ENCODE measurements at regions of chr15 and their contacts with region 1.

Region 1: DNA sequence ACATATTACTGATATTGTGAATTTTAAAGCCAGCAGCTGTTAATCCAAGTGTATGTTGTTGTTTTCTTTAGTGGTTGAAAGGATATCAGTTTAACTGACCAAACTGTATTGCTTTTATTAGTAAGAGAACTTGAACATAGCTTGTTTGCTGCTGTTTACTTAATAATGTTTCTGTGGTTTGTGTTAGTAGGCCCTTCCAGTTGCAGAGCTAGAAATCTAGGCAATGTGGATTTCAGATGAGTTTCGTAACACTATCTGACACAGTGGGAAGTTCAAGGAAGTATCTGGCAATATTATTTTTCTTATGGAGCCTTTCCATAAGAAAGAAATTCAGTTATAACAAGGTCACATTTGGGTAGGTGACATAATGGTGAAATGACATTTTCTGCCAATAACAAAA is 18.5 kb downstream of the ZNF609 start:
- DNase-seq: no peak
- ATAC-seq: no peak
- H3K4me3 ChIP-seq: no peak overlapping the region
- H3K27ac ChIP-seq: no peak overlapping the region
- H3K4me1 ChIP-seq: no peaks in the 10 kb centered on the region
- H3K27me3 ChIP-seq: no peaks in the 10 kb centered on the region
- CTCF ChIP-seq: no peak

Region 2: DNA sequence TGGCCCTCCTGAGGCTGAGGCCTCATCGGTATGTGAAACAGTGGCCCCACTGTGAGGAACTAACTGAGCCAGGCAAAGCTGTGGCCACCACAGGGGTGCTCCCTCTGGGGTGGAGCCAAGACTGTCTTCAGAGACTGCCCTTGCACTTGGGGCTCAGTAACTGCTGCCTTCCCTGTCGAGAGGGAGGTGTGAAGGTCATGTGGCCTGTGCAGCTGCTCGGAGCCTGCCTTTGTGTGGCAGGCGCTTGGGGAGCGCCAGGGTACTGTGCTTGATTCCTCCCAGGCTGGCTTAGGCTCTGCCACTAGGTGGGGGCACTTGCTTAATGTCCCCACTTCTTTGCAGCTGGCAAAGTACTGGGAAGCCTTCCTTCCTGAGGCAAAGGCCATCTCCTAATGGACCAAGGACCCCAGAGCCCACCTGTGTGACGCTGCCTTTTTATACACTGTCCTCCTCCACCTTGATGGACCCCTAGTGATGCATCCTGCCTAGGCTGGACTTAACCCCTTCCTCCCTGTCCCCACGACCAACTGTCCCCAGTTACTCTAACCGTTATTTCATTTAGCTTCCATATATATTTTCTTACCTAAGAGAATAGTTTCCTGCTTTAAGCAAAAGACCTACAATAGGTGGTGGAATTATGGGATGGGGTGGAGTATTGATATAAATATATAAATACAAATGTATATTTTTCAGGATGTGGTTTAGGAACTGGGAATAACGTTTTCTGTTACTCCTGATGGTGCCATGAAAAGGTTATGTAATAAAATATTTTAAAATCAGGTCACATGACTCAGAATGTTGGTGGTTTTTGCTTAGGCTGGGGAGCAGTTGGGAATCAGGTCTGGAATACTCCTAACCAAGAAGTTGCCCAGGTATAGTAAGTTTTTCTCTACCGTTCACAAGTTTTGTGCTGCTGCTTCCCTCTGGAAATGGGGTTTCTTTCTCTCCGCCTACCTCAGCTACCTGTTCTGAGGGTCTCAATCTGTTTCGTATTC is 341.3 kb before region 1 on chr15:
- CTCF ChIA-PET with region 1: no interaction called
- POLR2A ChIA-PET with region 1: no interaction called
- in situ Hi-C with region 1: no loop called
- intact Hi-C with region 1: no loop called
- DNase-seq: no peak
- ATAC-seq: peak; percentile 64; the same call in 1 of the 2 replicates
- H3K4me3 ChIP-seq: no peak overlapping the region
- H3K27ac ChIP-seq: no peak overlapping the region
- H3K4me1 ChIP-seq: no peaks in the 10 kb centered on the region
- H3K27me3 ChIP-seq: no peaks in the 10 kb centered on the region
- CTCF ChIP-seq: no peak; the same call in 1 of the 2 replicates

Region 3: DNA sequence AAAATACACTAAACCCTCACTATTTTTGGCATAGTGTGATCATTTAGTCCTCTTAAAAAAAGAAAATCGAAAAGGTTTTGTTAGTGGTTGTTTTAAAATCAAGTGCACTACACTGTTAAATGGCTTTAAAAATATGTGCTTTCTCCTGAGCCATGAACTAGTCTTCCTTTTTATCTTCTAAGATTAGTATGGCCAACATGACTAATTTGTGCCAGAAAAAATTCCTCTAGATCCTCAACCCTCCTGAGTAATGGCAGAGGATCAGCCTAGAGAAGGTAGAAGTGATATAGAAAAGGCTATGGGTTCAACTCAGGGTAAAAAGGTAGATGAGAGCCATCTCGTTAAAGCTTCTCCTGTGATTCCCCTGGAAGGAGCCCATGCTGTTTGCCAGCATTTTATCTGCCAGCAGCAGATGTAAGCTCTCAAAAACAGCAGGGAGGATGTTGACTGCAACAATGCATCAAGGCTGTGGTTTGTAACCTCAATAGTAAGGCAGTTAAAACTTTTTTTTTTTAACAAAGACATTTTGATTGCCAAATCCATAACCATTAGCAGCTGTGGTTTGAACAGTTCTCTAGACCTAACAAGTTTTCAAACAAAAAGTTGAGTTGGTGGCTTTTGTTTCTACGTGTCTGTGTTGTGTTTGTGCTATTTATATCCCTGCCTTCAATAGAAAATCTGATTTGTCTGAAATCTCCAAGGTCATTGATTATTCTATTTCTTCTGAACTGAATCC is 48.7 kb before region 1 on chr15:
- CTCF ChIA-PET with region 1: no interaction called
- POLR2A ChIA-PET with region 1: interaction called, 10 read pairs
- in situ Hi-C with region 1: no loop called
- intact Hi-C with region 1: no loop called
- DNase-seq: no peak
- ATAC-seq: no peak
- H3K4me3 ChIP-seq: no peak overlapping the region
- H3K27ac ChIP-seq: no peak overlapping the region
- H3K4me1 ChIP-seq: no peaks in the 10 kb centered on the region
- H3K27me3 ChIP-seq: no peaks in the 10 kb centered on the region
- CTCF ChIP-seq: no peak

Region 4: GRCh38 chr15:64536244-64536836 is 57.5 kb after region 1 on chr15:
- CTCF ChIA-PET with region 1: no interaction called
- POLR2A ChIA-PET with region 1: no interaction called
- in situ Hi-C with region 1: no loop called
- intact Hi-C with region 1: loop called (anchors 10 kb)
- DNase-seq: peak; percentile 64
- ATAC-seq: peak; percentile 90
- H3K4me3 ChIP-seq: no peak overlapping the region
- H3K27ac ChIP-seq: 0 out of 2 replicates have a peak overlapping the region, but pooled peaks have one; percentile 6
- H3K4me1 ChIP-seq: peaks cover 15% of the 10 kb centered on the region
- H3K27me3 ChIP-seq: no peaks in the 10 kb centered on the region
- CTCF ChIP-seq: no peak

Region 5: GRCh38 chr15:64571857-64572291 is 93.0 kb after region 1 on chr15:
- CTCF ChIA-PET with region 1: no interaction called
- POLR2A ChIA-PET with region 1: no interaction called
- in situ Hi-C with region 1: no loop called
- intact Hi-C with region 1: no loop called
- DNase-seq: no peak
- ATAC-seq: no peak
- H3K4me3 ChIP-seq: no peak overlapping the region
- H3K27ac ChIP-seq: no peak overlapping the region
- H3K4me1 ChIP-seq: no peaks in the 10 kb centered on the region
- H3K27me3 ChIP-seq: no peaks in the 10 kb centered on the region
- CTCF ChIP-seq: no peak

Region 6: GRCh38 chr15:65101411-65101890 is 622.6 kb after region 1 on chr15:
- CTCF ChIA-PET with region 1: no interaction called
- POLR2A ChIA-PET with region 1: no interaction called
- in situ Hi-C with region 1: no loop called
- intact Hi-C with region 1: no loop called
- DNase-seq: peak; percentile 13
- ATAC-seq: peak; percentile 62; the same call in 1 of the 2 replicates
- H3K4me3 ChIP-seq: no peak overlapping the region
- H3K27ac ChIP-seq: no peak overlapping the region
- H3K4me1 ChIP-seq: no peaks in the 10 kb centered on the region
- H3K27me3 ChIP-seq: no peaks in the 10 kb centered on the region
- CTCF ChIP-seq: peak; percentile 86